Heart left ventricle (tissue), 16 donors: ENCODE measurements at regions of chr3 and their contacts with region 1.

Region 1: DNA sequence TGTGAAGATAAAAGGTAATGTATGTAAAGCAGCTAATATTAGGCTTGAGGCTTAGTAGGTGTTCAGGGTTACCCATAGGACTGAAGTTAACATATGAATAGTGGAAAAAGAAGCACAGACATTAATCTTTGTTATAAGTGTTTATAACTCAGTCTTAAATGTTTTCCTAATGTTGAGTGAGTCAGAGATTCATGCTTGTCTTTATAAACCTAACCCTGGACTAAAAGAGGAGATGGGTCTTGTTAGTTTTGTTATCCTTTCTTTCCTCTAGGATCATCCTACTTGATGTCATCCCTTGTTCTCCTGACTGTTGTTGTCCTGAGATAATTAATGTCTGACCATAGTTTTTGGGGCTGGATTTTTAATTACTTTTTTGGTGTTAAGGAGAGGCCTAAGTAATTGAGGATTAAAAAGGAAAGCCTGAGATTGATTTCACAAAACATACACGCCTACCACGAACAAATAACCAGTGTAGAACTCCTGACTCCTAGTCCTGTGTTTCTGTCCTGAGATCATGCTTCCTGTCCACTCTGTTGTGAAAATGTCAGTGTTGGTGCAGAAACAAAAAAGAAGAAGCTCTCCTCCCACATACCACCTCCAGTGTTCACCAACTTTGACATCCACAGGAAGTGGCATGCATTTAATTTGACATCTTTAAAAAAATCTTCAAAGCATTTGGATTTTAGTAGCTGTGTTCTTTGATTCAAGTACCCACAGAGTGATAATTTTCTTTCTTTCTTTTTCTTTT is 8.4 kb downstream of the MITF start:
- DNase-seq: no peak
- ATAC-seq: no peak
- H3K4me3 ChIP-seq: no peak overlapping the region
- H3K27ac ChIP-seq: peak overlapping the region in 9 of 12 donors; percentile 3 to 93 (median 43)
- H3K4me1 ChIP-seq: peaks cover 0 to 89% (median 78%) of the 10 kb centered on the region in 12 donors
- H3K27me3 ChIP-seq: no peaks in the 10 kb centered on the region
- CTCF ChIP-seq: no peak
- POLR2A ChIP-seq: no peak

Region 2: DNA sequence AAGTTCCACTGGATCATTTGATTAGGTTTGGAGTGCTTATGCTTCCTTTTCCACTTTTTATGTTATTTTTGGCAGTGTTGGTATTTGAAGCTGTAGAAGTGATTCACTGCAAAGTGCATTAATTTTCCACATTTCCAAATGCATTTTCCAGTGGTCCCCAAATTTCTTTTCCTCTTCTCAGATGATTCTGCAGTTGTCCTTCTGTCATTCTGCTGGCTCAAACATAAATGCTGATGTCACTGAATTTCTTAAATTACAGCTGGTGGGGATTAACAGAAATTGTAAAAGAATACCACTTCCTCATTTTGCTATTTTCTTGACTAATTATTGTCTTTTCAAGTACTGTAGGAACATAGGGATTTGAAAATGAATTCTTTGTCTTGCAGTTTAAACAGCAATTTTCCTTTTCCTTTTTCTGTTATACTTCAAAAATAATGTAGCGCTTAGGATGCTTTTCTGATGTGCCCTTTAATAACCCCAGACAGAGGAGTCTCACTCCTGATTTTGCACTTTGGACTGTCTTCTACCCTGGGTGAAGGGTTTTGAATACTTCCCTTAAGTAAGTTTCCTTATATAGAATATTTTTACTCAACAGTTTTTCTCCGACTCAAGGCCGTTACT is 16.5 kb after region 1 on chr3:
- intact Hi-C with region 1: loop called in 1 of 10 experiments (anchors 2 kb)
- DNase-seq: no peak
- ATAC-seq: no peak
- H3K4me3 ChIP-seq: peak overlapping the region in 2 of 12 donors; percentile 12 to 16
- H3K27ac ChIP-seq: peak overlapping the region in 8 of 12 donors; percentile 1 to 90 (median 32)
- H3K4me1 ChIP-seq: peaks cover 0 to 84% (median 59%) of the 10 kb centered on the region in 12 donors
- H3K27me3 ChIP-seq: no peaks in the 10 kb centered on the region
- CTCF ChIP-seq: no peak
- POLR2A ChIP-seq: no peak

Region 3: DNA sequence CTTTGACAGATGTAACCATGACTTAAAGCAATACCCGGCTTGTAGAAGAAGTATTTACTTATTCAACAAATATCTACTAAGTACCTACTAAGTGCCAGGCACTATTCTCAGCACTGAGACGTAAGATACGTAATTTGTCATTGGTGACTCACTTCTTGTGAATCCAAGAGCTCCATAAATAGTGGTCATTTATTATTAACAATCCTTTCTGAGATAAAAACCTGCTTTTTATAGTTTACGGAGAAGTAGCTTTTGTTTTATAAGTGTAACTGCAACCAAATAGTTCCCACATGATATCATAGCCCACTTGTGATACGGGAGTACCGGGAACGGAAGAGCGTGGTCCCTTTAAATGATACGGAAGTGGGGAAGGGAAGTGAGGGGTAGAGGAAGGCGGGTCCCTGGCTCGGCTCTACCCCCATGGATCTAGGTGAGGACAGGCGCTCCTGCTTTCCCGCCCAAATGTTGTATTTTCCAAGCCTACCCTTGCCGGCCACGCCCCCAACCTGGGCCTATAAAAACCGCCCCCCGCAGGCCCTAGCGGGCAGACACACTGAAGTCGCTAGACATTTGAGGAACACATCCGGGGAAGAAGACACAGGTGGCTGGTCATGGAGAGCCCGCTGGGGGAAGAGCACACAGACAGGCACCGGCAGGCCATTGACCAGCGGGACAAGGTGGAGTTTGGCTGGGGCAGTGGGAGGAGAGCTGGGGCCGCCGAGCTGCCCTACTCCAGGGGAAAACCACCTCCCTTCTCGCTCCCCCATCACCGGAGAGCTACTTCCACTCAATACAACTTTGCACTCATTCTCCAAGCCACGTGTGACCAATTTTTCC is 251.7 kb after region 1 on chr3 and contains the start of gene SAMMSON:
- intact Hi-C with region 1: no loop called
- DNase-seq: peak in 2 of 5 donors; percentile 28 to 46
- ATAC-seq: peak in 3 of 4 donors; percentile 46 to 72 (median 56)
- H3K4me3 ChIP-seq: peak within 1 kb of the TSS in 10 of 12 donors; percentile 4 to 54 (median 31)
- H3K27ac ChIP-seq: peak within 1 kb of the TSS in 5 of 12 donors; percentile 7 to 64 (median 43)
- H3K4me1 ChIP-seq: no peaks in the 10 kb centered on the region
- H3K27me3 ChIP-seq: no peaks in the 10 kb centered on the region
- CTCF ChIP-seq: no peak
- POLR2A ChIP-seq: no peak
- total RNA-seq, gene SAMMSON: not detected